GM12878 (cell line): ENCODE measurements at regions of chr1 and their contacts with region 1.

Region 1: DNA sequence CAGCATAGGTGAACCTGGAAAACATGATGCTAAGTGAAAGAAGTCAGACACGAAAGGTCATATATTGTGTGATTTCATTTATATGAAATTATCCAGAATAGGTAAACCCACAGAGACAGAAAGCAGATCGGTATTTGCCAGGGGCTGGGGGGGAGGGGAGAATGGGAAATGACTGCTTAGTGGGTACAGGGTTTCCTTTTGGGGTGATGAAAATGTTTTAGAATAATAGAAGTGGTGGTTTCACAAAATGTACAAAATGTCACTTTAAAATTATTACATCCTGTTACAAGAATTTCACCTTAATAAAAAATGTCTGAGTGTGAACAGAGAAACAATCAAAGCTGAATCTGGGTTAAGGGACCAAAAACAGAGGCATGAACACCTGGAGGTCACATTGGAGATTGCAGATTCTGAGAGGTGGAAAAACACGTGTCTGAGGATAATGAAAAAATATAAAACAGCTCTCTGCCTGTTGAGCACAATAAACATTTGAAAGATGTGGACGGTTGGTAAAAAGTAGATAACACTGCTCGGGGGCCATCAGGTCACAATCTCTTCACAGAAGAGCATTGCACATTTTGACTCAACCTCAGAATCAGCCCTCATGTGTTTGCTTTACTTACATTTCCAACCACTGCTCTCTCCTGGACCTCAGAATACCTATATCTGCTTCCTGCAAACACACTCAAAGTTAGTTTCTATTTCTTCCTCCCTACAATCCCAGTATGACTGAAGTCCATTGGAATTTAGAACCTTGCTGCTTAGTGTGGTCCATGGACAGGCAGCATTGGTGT is 3.2 kb downstream of the SLAMF6 start:
- DNase-seq: peak; percentile 64
- ATAC-seq: peak; percentile 70
- H3K4me3 ChIP-seq: peak overlapping the region; percentile 77
- H3K27ac ChIP-seq: peak overlapping the region; percentile 85
- H3K4me1 ChIP-seq: no peaks in the 10 kb centered on the region
- H3K27me3 ChIP-seq: no peaks in the 10 kb centered on the region
- CTCF ChIP-seq: peak in 2 of 3 experiments; percentile 25 to 27; a peak in 2 of 6 replicates
- EP300 ChIP-seq: no peak
- POLR2A ChIP-seq: no peak
- RAD21 ChIP-seq: peak; percentile 16; the same call in 1 of the 2 replicates

Region 2: DNA sequence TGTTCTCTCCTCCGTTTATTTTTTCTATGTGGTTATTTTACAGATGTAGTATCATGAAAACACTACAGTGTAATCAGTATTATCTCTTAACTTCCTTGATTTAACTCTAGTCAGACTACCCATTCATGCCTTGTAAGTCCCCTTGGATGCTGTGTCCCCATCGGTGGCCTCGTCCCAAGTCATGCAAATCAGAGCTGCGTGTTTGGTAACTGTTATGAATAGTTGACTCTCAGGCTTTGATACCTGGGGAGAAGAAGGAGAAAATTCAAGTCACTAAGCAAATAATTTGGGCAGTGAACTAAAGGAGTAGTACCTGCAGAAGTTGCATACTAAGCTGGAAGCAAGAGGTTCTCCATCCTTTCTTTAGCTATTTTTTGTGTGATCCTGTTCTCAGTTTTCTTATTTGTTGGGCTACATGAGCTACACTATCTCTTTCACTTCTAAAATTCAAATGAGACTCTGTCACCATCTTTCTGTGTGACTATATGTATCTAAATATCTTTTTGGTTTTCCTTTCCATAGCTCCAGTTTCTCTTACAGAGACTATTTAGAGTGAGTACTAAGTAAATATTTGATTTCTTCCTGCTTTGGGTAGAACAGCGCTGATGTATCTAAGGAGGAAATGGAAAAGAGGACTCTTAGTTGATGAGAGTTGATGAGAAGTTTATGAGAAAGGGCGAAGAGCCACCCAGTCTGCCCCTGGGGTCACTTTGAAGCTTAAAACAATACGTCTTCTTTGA is 68.5 kb before region 1 on chr1:
- CTCF ChIA-PET with region 1: interaction called, 3 read pairs
- POLR2A ChIA-PET with region 1: interaction called, 6 read pairs
- RAD21 ChIA-PET with region 1: interaction called, 6 read pairs
- SMC1A ChIA-PET with region 1: interaction called, 7 read pairs
- in situ Hi-C with region 1: no loop called
- intact Hi-C with region 1: loop called (anchors 5 kb)
- DNase-seq: peak; percentile 44
- ATAC-seq: peak; percentile 43
- H3K4me3 ChIP-seq: 0 out of 2 replicates have a peak overlapping the region, but pooled peaks have one; percentile 2
- H3K27ac ChIP-seq: peak overlapping the region; percentile 82
- H3K4me1 ChIP-seq: peaks cover 47% of the 10 kb centered on the region
- H3K27me3 ChIP-seq: no peaks in the 10 kb centered on the region
- CTCF ChIP-seq: no peak
- EP300 ChIP-seq: no peak
- POLR2A ChIP-seq: no peak
- RAD21 ChIP-seq: no peak

Region 3: GRCh38 chr1:160489513-160490261 is 30.2 kb before region 1 on chr1:
- CTCF ChIA-PET with region 1: interaction called, 4 read pairs
- POLR2A ChIA-PET with region 1: no interaction called
- RAD21 ChIA-PET with region 1: no interaction called
- SMC1A ChIA-PET with region 1: interaction called, 11 read pairs
- in situ Hi-C with region 1: no loop called
- intact Hi-C with region 1: no loop called
- DNase-seq: no peak
- ATAC-seq: peak; percentile 37
- H3K4me3 ChIP-seq: no peak overlapping the region
- H3K27ac ChIP-seq: peak overlapping the region; percentile 68
- H3K4me1 ChIP-seq: peaks cover 17% of the 10 kb centered on the region
- H3K27me3 ChIP-seq: no peaks in the 10 kb centered on the region
- CTCF ChIP-seq: no peak
- EP300 ChIP-seq: no peak
- POLR2A ChIP-seq: no peak
- RAD21 ChIP-seq: no peak

Region 4: GRCh38 chr1:160499631-160500030 is 20.2 kb before region 1 on chr1:
- CTCF ChIA-PET with region 1: interaction called, 3 read pairs
- POLR2A ChIA-PET with region 1: interaction called, 4 read pairs
- RAD21 ChIA-PET with region 1: no interaction called
- SMC1A ChIA-PET with region 1: interaction called, 22 read pairs
- in situ Hi-C with region 1: no loop called
- intact Hi-C with region 1: no loop called
- DNase-seq: no peak
- ATAC-seq: no peak
- H3K4me3 ChIP-seq: no peak overlapping the region
- H3K27ac ChIP-seq: no peak overlapping the region
- H3K4me1 ChIP-seq: no peaks in the 10 kb centered on the region
- H3K27me3 ChIP-seq: no peaks in the 10 kb centered on the region
- CTCF ChIP-seq: no peak
- EP300 ChIP-seq: no peak
- POLR2A ChIP-seq: no peak
- RAD21 ChIP-seq: no peak

Region 5: DNA sequence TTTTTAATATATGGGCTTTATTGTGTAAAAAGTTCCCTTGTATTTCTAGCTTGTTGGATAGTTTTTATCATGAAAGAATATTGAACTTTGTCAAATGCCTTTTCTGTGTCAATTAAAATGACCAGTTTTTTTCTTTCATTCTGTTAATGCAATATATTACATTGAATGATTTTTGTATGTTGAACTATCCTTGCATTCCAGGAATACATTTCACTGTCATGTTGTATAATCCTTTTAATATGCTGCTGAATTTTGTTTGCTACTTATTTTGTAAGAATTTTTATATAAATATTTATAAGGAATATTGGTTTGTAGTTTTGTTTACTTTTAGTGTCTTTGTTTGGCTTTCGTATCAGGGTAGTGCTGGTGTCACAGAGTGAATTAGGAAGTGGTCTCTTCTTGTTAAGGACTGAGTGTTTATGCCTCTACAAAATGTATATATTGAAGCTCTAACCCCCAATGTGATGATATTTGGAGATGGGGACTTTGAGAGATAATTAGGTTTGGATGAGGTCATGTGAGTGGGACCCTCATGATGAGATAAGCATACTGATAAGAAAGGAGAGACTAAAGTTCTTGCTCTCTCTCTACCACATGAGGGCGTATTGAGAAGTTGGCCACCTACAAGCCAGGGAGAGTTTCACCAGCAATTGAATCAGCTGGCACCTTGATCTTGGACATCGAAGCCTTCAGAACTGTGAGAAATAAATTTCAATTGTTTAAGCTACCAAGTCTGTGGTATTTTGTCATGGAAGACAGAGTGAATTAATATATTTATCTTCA is 15.2 kb after region 1 on chr1:
- CTCF ChIA-PET with region 1: interaction called, 24 read pairs
- POLR2A ChIA-PET with region 1: interaction called, 34 read pairs
- RAD21 ChIA-PET with region 1: interaction called, 76 read pairs
- SMC1A ChIA-PET with region 1: interaction called, 178 read pairs
- in situ Hi-C with region 1: no loop called
- intact Hi-C with region 1: no loop called
- DNase-seq: no peak
- ATAC-seq: no peak
- H3K4me3 ChIP-seq: no peak overlapping the region
- H3K27ac ChIP-seq: no peak overlapping the region
- H3K4me1 ChIP-seq: peaks cover 11% of the 10 kb centered on the region
- H3K27me3 ChIP-seq: no peaks in the 10 kb centered on the region
- CTCF ChIP-seq: no peak
- EP300 ChIP-seq: no peak
- POLR2A ChIP-seq: no peak
- RAD21 ChIP-seq: no peak

Region 6: GRCh38 chr1:160539990-160540858 is 20.4 kb after region 1 on chr1:
- CTCF ChIA-PET with region 1: interaction called, 24 read pairs
- POLR2A ChIA-PET with region 1: interaction called, 34 read pairs
- RAD21 ChIA-PET with region 1: interaction called, 76 read pairs
- SMC1A ChIA-PET with region 1: interaction called, 178 read pairs
- in situ Hi-C with region 1: no loop called
- intact Hi-C with region 1: no loop called
- DNase-seq: peak; percentile 95
- ATAC-seq: peak; percentile 95
- H3K4me3 ChIP-seq: peak overlapping the region; percentile 38; the same call in 1 of the 2 replicates
- H3K27ac ChIP-seq: peak overlapping the region; percentile 92
- H3K4me1 ChIP-seq: peaks cover 23% of the 10 kb centered on the region
- H3K27me3 ChIP-seq: no peaks in the 10 kb centered on the region
- CTCF ChIP-seq: no peak
- EP300 ChIP-seq: peak; percentile 53 to 73; a peak in 3 of 4 replicates
- POLR2A ChIP-seq: peak; percentile 66
- RAD21 ChIP-seq: 0 out of 2 replicates have a peak, but pooled peaks have one; percentile 11

Region 7: DNA sequence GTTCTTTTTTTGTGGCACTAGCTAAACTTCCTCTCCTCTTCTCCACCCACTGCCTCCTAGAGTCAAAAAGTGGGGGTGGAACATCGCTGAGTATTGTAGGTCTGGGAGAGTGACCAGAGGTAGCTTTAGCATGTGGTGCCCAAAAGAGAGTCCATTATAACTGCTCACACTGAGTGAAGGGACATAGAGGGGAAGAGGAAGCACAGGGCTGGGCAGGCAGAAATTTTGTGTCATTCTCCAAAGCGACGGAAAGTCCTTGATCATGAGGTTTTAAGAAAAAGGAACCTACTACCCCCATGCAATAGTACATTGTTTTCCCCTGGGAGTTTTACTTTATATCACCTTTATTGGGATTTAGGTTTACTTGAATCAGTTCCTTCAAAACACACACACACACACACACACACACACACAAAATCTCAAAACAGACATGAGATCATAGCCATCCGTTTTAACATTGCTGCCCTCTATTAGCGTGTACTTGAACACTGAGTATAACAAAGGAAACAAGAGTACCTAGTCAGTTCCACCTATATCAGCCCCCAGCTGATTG is 55.3 kb after region 1 on chr1:
- CTCF ChIA-PET with region 1: interaction called, 4 read pairs
- POLR2A ChIA-PET with region 1: interaction called, 5 read pairs
- RAD21 ChIA-PET with region 1: interaction called, 16 read pairs
- SMC1A ChIA-PET with region 1: interaction called, 8 read pairs
- in situ Hi-C with region 1: no loop called
- intact Hi-C with region 1: no loop called
- DNase-seq: no peak
- ATAC-seq: peak; percentile 49
- H3K4me3 ChIP-seq: no peak overlapping the region
- H3K27ac ChIP-seq: peak overlapping the region; percentile 97
- H3K4me1 ChIP-seq: peaks cover 27% of the 10 kb centered on the region
- H3K27me3 ChIP-seq: no peaks in the 10 kb centered on the region
- CTCF ChIP-seq: no peak
- EP300 ChIP-seq: no peak
- POLR2A ChIP-seq: no peak
- RAD21 ChIP-seq: no peak